BJ (cell line): ENCODE measurements at regions of chr1 and their contacts with region 1.

Region 1: GRCh38 chr1:77828098-77828497 is 48.6 kb downstream of the MIGA1 start:
- DNase-seq: no peak
- H3K4me3 ChIP-seq: no peak overlapping the region
- H3K27me3 ChIP-seq: no peaks in the 10 kb centered on the region
- CTCF ChIP-seq: no peak

Region 2: GRCh38 chr1:77874804-77875445 is 46.8 kb after region 1 on chr1:
- CTCF ChIA-PET with region 1: no interaction called
- POLR2A ChIA-PET with region 1: no interaction called
- DNase-seq: peak; percentile 32
- H3K4me3 ChIP-seq: no peak overlapping the region
- H3K27me3 ChIP-seq: no peaks in the 10 kb centered on the region
- CTCF ChIP-seq: no peak

Region 3: GRCh38 chr1:77900687-77901293 is 72.7 kb after region 1 on chr1:
- CTCF ChIA-PET with region 1: interaction called, 10 read pairs
- POLR2A ChIA-PET with region 1: no interaction called
- DNase-seq: peak; percentile 10
- H3K4me3 ChIP-seq: no peak overlapping the region
- H3K27me3 ChIP-seq: no peaks in the 10 kb centered on the region
- CTCF ChIP-seq: peak; percentile 71

Region 4: GRCh38 chr1:78142736-78143135 is 314.6 kb after region 1 on chr1:
- CTCF ChIA-PET with region 1: no interaction called
- POLR2A ChIA-PET with region 1: no interaction called
- DNase-seq: no peak
- H3K4me3 ChIP-seq: no peak overlapping the region
- H3K27me3 ChIP-seq: no peaks in the 10 kb centered on the region
- CTCF ChIP-seq: no peak